ENCODE measurements at regions of chr3 and their contacts with region 1.

Region 1: DNA sequence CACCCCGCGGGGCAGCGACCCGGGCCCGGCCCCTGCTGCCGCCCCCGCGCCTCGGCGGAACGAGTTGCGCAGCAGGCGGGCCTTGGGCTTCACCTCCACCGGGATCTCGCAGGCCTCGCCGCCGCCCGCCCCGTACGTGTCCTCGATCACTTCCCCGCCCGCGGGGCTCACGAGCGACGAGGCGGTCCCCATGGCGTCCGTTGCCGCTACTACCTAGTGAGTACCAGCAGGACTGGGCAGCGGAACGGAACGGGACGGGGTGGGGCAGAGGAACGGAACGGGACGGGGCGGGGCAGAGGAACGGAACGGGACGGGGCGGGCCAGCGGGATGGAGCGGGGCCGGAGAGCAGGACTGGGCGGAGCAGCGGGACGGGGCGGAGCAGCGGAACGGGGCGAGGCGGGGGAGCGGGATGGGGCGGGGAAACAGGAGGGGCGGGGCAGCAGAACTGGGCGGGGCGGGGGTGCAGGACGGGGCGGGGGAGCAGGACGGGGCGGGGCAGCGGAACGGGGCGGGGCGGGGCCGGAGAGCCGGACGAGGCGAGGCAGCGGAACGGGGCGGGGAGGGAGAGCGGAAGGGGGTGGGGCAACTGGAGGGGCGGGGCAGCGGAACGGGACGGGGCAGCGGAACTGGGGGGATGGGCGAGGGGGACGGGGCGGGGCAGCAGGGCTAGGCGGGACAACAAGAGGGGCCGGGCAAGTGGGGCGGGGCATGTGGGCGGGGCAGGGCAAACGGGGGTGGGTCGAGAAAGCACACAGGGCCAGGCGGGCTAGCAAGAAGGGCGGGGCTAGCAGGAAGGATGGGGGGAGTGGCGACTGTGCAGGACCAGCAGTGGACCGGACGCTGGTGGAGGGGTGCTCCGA is at the start of gene NPHP3:
- DNase-seq: peak; percentile 97
- H3K4me3 ChIP-seq: peak within 1 kb of the TSS; percentile 45 to 93 (median 53)
- H3K27ac ChIP-seq: peak within 1 kb of the TSS; percentile 81 to 99 (median 84)
- H3K4me1 ChIP-seq: peaks cover 16 to 20% of the 10 kb centered on the region in 2 donors
- H3K27me3 ChIP-seq: no peaks in the 10 kb centered on the region
- CTCF ChIP-seq: peak in 1 of 6 experiments; percentile 27
- POLR2A ChIP-seq: peak; percentile 55 to 95
- total RNA-seq, gene NPHP3: 34.4 to 74.8 (median 63.9) TPM

Region 2: DNA sequence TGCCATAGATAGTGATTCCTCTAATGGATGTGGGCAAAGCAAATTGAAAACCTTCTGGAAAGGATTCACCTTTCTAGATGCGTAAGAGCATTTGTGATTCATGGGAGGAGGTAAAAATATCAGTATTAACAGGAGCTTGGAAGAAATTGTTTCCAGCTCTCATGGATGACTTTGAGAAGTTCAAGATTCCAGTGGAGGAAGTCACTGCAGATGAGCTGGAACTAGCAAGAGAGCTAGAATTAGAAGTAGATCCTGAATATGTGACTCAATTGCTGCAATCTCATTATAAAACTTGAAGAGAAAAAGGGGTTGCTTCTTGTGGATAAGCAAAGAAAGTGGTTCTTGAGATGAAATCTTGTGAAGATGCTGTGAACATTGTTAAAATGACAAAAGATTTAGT is 213.3 kb before region 1 on chr3:
- intact Hi-C with region 1: no loop called
- DNase-seq: no peak
- H3K4me3 ChIP-seq: no peak overlapping the region
- H3K27ac ChIP-seq: no peak overlapping the region
- H3K4me1 ChIP-seq: no peaks in the 10 kb centered on the region
- H3K27me3 ChIP-seq: no peaks in the 10 kb centered on the region
- CTCF ChIP-seq: no peak
- POLR2A ChIP-seq: no peak

Region 3: GRCh38 chr3:132840201-132840700 is 117.9 kb after region 1 on chr3:
- intact Hi-C with region 1: no loop called
- DNase-seq: no peak
- H3K4me3 ChIP-seq: no peak overlapping the region
- H3K27ac ChIP-seq: no peak overlapping the region
- H3K4me1 ChIP-seq: no peaks in the 10 kb centered on the region
- H3K27me3 ChIP-seq: no peaks in the 10 kb centered on the region
- CTCF ChIP-seq: no peak
- POLR2A ChIP-seq: no peak

Region 4: GRCh38 chr3:133271539-133271938 is 549.1 kb after region 1 on chr3:
- intact Hi-C with region 1: no loop called
- DNase-seq: no peak
- H3K4me3 ChIP-seq: no peak overlapping the region
- H3K27ac ChIP-seq: no peak overlapping the region
- H3K4me1 ChIP-seq: peaks cover 4 to 19% of the 10 kb centered on the region in 2 donors
- H3K27me3 ChIP-seq: no peaks in the 10 kb centered on the region
- CTCF ChIP-seq: no peak
- POLR2A ChIP-seq: no peak

Region 5: GRCh38 chr3:133384331-133385027 is 662.1 kb after region 1 on chr3:
- intact Hi-C with region 1: loop called (anchors 5 kb)
- DNase-seq: peak; percentile 78 to 82
- H3K4me3 ChIP-seq: no peak overlapping the region
- H3K27ac ChIP-seq: no peak overlapping the region
- H3K4me1 ChIP-seq: peaks cover 6 to 21% of the 10 kb centered on the region in 2 donors
- H3K27me3 ChIP-seq: no peaks in the 10 kb centered on the region
- CTCF ChIP-seq: peak; percentile 46 to 96 (median 94)
- POLR2A ChIP-seq: no peak

Region 6: DNA sequence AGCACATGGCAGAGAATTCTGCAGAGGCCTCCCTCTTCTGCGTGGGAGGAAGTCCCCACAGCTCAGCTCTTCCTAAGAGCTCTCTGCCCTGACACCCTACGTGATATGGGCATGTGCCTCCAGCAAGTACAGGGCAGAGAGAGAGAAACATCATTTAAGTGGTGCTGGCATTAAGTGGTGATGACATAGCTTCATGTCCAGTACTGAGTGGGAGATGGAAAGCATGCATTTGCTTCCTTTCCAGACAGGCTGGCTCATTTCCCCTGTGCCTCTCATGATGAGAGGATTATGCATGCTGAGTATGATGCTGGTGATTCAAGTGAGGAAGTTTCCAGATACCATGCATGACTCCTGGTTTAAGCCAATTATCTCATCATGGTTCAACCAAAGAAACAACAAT is 704.3 kb after region 1 on chr3:
- intact Hi-C with region 1: loop called (anchors 5 kb)
- DNase-seq: no peak
- H3K4me3 ChIP-seq: no peak overlapping the region
- H3K27ac ChIP-seq: no peak overlapping the region
- H3K4me1 ChIP-seq: peaks cover 0 to 7% of the 10 kb centered on the region in 2 donors
- H3K27me3 ChIP-seq: no peaks in the 10 kb centered on the region
- CTCF ChIP-seq: no peak
- POLR2A ChIP-seq: no peak

Region 7: DNA sequence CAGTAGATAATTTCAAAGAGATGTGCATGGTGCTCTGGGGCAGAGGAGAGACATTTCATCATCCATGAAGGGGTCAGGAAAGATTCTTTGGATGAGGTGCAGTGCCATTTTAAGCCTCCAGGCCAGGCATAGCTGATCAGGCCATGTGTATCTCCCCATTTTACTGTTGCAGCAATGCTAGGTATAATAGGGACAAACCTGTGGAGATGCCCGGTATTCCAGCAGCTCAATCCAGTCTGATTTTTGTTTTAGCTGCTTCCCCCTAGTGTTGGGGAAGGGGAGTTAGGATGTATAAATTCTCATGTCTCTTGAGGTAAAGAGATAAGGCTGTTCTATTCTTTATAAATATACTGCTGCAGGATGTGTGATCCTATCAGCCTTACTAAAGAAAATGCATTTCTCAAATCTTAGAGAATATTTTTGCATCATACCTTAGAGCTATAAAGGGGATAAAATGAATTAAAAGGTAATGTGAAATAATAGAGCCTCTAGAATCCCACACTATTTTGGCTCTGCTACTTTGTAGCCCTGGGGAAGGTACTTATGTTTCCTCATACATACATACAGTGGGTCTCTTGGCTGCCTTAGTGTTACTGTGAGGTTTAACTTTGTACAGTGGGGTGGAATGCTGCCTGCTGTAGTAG is 856.3 kb after region 1 on chr3:
- intact Hi-C with region 1: loop called (anchors 5 kb)
- DNase-seq: no peak
- H3K4me3 ChIP-seq: no peak overlapping the region
- H3K27ac ChIP-seq: peak overlapping the region in 1 of 3 donors; percentile 27
- H3K4me1 ChIP-seq: peaks cover 38 to 48% of the 10 kb centered on the region in 2 donors
- H3K27me3 ChIP-seq: no peaks in the 10 kb centered on the region
- CTCF ChIP-seq: peak in 4 of 6 experiments; percentile 37 to 57 (median 49)
- POLR2A ChIP-seq: no peak

Measured in thyroid gland (tissue), 4 donors.